GM12878 (cell line): ENCODE measurements at regions of chr9 and their contacts with region 1.

Region 1: GRCh38 chr9:137223078-137223970 is 1.3 kb upstream of the RNF208 start:
- DNase-seq: peak; percentile 93
- ATAC-seq: peak; percentile 87
- H3K4me3 ChIP-seq: peak overlapping the region; percentile 93
- H3K27ac ChIP-seq: peak overlapping the region; percentile 73
- H3K4me1 ChIP-seq: peaks cover 16% of the 10 kb centered on the region
- H3K27me3 ChIP-seq: no peaks in the 10 kb centered on the region
- CTCF ChIP-seq: no peak
- EP300 ChIP-seq: no peak
- POLR2A ChIP-seq: peak; percentile 79
- RAD21 ChIP-seq: no peak

Region 2: DNA sequence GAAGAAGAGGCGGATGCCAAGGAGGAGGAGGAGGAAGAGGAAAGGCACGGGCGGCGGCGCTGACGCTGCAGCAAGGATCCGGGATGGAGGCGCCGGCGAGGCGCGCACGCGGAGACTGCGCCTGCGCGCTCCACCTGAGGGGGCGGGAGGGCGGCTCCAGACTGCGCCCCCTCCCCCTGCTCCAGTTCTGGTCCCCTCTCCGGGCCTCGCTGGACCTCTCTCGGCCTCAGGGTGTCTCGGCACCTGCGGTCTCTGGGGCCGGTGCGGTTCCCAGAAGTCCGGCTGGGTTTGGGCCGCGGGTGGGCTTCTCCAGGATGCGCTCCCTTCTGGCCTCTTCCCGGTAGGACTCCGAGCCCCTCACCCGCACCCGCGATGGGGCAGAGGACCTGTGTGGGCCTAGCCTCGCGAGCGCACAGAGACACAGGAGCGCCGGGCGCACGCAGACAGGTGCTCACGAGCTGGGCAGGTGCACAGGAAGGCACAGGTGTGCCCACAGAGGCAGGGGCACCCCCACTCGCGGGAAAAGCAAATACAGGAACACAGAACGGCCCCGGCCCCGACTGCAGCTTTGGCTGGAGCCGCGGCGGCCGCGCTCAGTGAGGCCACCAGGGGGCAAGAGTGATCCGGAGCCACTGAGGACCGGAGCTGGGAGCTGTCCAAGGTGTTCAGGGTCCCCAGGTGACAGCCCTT is 177.1 kb before region 1 on chr9 and contains the start of gene NPDC1:
- CTCF ChIA-PET with region 1: interaction called, 5 read pairs
- POLR2A ChIA-PET with region 1: no interaction called
- RAD21 ChIA-PET with region 1: interaction called, 7 read pairs
- SMC1A ChIA-PET with region 1: interaction called, 3 read pairs
- in situ Hi-C with region 1: no loop called
- intact Hi-C with region 1: loop called (anchors 10 kb)
- DNase-seq: no peak
- ATAC-seq: peak; percentile 90
- H3K4me3 ChIP-seq: no peak within 1 kb of the TSS
- H3K27ac ChIP-seq: no peak within 1 kb of the TSS
- H3K4me1 ChIP-seq: no peaks in the 10 kb centered on the region
- H3K27me3 ChIP-seq: peaks cover 12 to 18% of the 10 kb centered on the region in 2 experiments; a peak in 3 of 4 replicates
- CTCF ChIP-seq: peak; percentile 82 to 95 (median 93)
- EP300 ChIP-seq: no peak
- POLR2A ChIP-seq: no peak
- RAD21 ChIP-seq: peak; percentile 63
- polyA plus RNA-seq, gene NPDC1: not detected

Region 3: GRCh38 chr9:137086531-137087408 is 136.6 kb before region 1 on chr9 and contains the start of gene MAN1B1:
- CTCF ChIA-PET with region 1: interaction called, 6 read pairs
- POLR2A ChIA-PET with region 1: interaction called, 13 read pairs
- RAD21 ChIA-PET with region 1: no interaction called
- SMC1A ChIA-PET with region 1: no interaction called
- in situ Hi-C with region 1: no loop called
- intact Hi-C with region 1: no loop called
- DNase-seq: peak; percentile 99
- ATAC-seq: peak; percentile 83
- H3K4me3 ChIP-seq: peak within 1 kb of the TSS; percentile 83
- H3K27ac ChIP-seq: peak within 1 kb of the TSS; percentile 90
- H3K4me1 ChIP-seq: peaks cover 29% of the 10 kb centered on the region
- H3K27me3 ChIP-seq: no peaks in the 10 kb centered on the region
- CTCF ChIP-seq: peak in 1 of 3 experiments; percentile 23; a peak in 1 of 6 replicates
- EP300 ChIP-seq: no peak
- POLR2A ChIP-seq: no peak
- RAD21 ChIP-seq: no peak
- polyA plus RNA-seq, gene MAN1B1: 0.71 to 2.0 TPM

Region 4: GRCh38 chr9:137114610-137115391 is 108.5 kb before region 1 on chr9 and contains the start of gene DPP7:
- CTCF ChIA-PET with region 1: interaction called, 22 read pairs
- POLR2A ChIA-PET with region 1: interaction called, 3 read pairs
- RAD21 ChIA-PET with region 1: interaction called, 4 read pairs
- SMC1A ChIA-PET with region 1: interaction called, 11 read pairs
- in situ Hi-C with region 1: no loop called
- intact Hi-C with region 1: loop called (anchors 1 kb)
- DNase-seq: no peak
- ATAC-seq: peak; percentile 97
- H3K4me3 ChIP-seq: peak within 1 kb of the TSS; percentile 70
- H3K27ac ChIP-seq: peak within 1 kb of the TSS; percentile 58; the same call in 1 of the 2 replicates
- H3K4me1 ChIP-seq: peaks cover 6% of the 10 kb centered on the region; the same call in 1 of the 2 replicates
- H3K27me3 ChIP-seq: no peaks in the 10 kb centered on the region
- CTCF ChIP-seq: no peak
- EP300 ChIP-seq: no peak
- POLR2A ChIP-seq: peak; percentile 87
- RAD21 ChIP-seq: no peak
- polyA plus RNA-seq, gene DPP7: 0.68 to 10.0 TPM

Region 5: DNA sequence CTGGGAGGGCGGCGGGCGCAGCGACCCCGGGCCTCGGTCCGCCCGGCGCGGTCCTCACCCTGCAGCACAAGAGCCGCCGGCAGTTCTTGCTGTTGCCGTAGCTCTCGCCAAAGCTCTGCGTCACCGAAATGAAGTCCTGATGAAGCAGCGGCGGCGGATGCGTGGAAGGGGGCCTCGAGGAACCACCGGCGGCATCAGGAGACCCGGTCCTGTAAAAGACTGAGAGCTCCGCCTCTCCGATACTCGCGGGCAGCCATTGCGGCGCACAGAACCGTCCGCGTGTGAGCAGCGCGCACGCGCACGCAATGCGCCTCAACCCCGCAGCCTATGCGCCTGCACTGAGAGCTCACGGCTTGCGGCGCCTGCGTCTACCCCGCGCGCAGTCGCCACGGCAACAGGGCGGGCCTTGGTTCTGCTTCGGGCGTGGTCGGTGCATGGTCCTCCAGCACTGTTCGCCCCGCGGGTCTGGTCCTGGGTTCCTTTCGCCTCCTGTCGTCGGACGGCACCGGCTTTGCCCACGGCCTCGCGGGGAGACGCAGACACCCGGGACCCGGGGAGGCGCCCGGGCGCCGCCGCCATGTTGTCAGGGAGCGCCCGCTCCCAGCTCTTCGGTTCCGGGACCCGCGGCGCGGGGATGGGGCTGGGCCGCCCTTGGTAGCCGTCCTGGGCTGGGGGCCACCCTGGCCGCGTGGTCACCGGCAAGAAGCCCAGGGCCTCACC is 93.7 kb before region 1 on chr9:
- CTCF ChIA-PET with region 1: interaction called, 4 read pairs
- POLR2A ChIA-PET with region 1: interaction called, 27 read pairs
- RAD21 ChIA-PET with region 1: interaction called, 12 read pairs
- SMC1A ChIA-PET with region 1: interaction called, 5 read pairs
- in situ Hi-C with region 1: loop called (anchors 5 kb)
- intact Hi-C with region 1: no loop called
- DNase-seq: peak; percentile 75
- ATAC-seq: peak; percentile 95
- H3K4me3 ChIP-seq: peak overlapping the region; percentile 72
- H3K27ac ChIP-seq: peak overlapping the region; percentile 82
- H3K4me1 ChIP-seq: peaks cover 8% of the 10 kb centered on the region
- H3K27me3 ChIP-seq: no peaks in the 10 kb centered on the region
- CTCF ChIP-seq: no peak
- EP300 ChIP-seq: no peak
- POLR2A ChIP-seq: peak; percentile 83
- RAD21 ChIP-seq: no peak

Region 6: DNA sequence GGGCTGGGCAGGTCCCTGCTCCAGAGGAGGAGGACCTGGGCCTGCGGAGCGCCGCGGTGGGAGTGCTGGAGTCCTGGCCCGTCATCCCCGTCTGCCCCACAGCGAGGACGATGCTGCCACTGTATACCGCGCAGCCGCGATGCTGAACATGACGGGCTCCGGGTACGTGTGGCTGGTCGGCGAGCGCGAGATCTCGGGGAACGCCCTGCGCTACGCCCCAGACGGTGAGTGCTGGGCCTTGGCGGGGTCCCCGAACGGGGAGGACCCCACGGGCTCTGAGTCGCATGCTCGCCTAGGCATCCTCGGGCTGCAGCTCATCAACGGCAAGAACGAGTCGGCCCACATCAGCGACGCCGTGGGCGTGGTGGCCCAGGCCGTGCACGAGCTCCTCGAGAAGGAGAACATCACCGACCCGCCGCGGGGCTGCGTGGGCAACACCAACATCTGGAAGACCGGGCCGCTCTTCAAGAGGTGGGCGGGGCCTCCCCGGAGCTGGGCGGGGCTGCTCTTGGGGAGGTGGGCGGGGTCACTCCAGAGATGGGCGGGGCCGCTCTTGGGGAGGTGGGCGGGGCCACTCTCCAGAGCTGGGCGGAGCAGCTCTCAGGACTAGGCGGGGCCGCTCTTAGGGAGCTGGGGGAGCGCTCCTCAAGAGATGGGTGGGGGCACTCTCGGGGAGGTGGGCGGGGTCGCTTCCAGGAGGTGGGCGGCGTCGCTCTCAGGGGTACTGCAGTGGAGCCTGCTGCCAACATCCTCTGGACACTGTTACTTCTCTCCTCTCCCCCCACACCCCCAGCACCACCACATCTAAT is 66.6 kb before region 1 on chr9:
- CTCF ChIA-PET with region 1: interaction called, 10 read pairs
- POLR2A ChIA-PET with region 1: interaction called, 33 read pairs
- RAD21 ChIA-PET with region 1: interaction called, 34 read pairs
- SMC1A ChIA-PET with region 1: interaction called, 4 read pairs
- in situ Hi-C with region 1: no loop called
- intact Hi-C with region 1: no loop called
- DNase-seq: no peak
- ATAC-seq: peak; percentile 73
- H3K4me3 ChIP-seq: peak overlapping the region; percentile 39; the same call in 1 of the 2 replicates
- H3K27ac ChIP-seq: no peak overlapping the region
- H3K4me1 ChIP-seq: peaks cover 31% of the 10 kb centered on the region
- H3K27me3 ChIP-seq: no peaks in the 10 kb centered on the region
- CTCF ChIP-seq: no peak
- EP300 ChIP-seq: no peak
- POLR2A ChIP-seq: no peak
- RAD21 ChIP-seq: no peak

Region 7: GRCh38 chr9:137194388-137194787 is 28.9 kb before region 1 on chr9:
- CTCF ChIA-PET with region 1: interaction called, 21 read pairs
- POLR2A ChIA-PET with region 1: interaction called, 22 read pairs
- RAD21 ChIA-PET with region 1: interaction called, 23 read pairs
- SMC1A ChIA-PET with region 1: interaction called, 4 read pairs
- in situ Hi-C with region 1: no loop called
- intact Hi-C with region 1: loop called (anchors 5 kb)
- DNase-seq: no peak
- ATAC-seq: no peak
- H3K4me3 ChIP-seq: no peak overlapping the region
- H3K27ac ChIP-seq: no peak overlapping the region
- H3K4me1 ChIP-seq: peaks cover 9% of the 10 kb centered on the region
- H3K27me3 ChIP-seq: no peaks in the 10 kb centered on the region
- CTCF ChIP-seq: no peak
- EP300 ChIP-seq: no peak
- POLR2A ChIP-seq: no peak
- RAD21 ChIP-seq: no peak

Region 8: DNA sequence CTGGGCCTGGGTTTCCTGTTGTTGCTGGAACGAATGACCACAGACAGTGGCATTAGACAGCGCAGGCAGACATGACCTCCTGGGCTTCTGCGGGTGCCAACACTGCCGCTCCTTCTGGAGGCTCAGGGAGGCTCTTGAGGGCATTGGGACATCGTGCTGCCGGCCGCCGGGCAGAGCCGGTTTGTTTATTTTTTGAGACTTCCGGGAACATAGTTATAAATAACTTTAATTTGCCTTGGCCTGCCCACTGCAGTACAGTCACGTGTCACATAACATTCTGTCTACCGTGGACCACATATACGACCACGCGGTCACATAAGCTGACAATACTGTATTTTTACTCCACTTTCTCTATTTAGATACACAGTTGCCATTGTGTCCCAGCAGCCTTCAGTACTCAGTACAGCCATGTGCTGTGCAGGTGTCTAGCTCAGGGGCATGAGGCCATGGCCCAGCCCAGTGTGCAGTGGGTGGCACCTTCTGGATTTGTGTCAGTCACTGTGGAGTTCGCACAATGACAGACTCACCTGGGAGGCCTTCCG is 46.0 kb after region 1 on chr9:
- CTCF ChIA-PET with region 1: no interaction called
- POLR2A ChIA-PET with region 1: no interaction called
- RAD21 ChIA-PET with region 1: no interaction called
- SMC1A ChIA-PET with region 1: no interaction called
- in situ Hi-C with region 1: no loop called
- intact Hi-C with region 1: no loop called
- DNase-seq: peak; percentile 34
- ATAC-seq: peak; percentile 64
- H3K4me3 ChIP-seq: peak overlapping the region; percentile 46; the same call in 1 of the 2 replicates
- H3K27ac ChIP-seq: peak overlapping the region; percentile 47
- H3K4me1 ChIP-seq: peaks cover 22% of the 10 kb centered on the region
- H3K27me3 ChIP-seq: no peaks in the 10 kb centered on the region
- CTCF ChIP-seq: no peak
- EP300 ChIP-seq: no peak
- POLR2A ChIP-seq: no peak; the same call in 1 of the 2 replicates
- RAD21 ChIP-seq: no peak

Region 9: DNA sequence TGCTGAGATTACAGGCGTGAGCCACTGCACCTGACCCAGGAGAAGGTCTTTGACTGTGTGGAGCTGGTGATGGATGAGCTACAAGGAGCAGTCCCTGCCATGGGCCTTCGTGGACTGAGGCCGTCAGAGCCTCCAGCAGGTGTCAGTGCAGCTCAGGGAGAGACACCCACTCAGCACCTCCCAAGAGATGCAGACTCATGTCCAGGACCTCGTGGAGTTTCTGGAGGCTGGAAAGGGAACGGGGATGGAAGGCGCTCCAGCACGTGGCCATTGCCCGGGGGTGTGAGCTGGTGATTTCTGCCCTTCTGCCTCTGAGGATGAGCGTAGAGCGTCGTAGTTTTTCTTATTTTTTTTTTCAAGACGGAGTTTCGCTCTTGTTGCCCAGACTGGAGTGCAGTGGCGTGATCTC is 63.7 kb after region 1 on chr9:
- CTCF ChIA-PET with region 1: no interaction called
- POLR2A ChIA-PET with region 1: no interaction called
- RAD21 ChIA-PET with region 1: no interaction called
- SMC1A ChIA-PET with region 1: no interaction called
- in situ Hi-C with region 1: no loop called
- intact Hi-C with region 1: no loop called
- DNase-seq: no peak
- ATAC-seq: peak; percentile 87
- H3K4me3 ChIP-seq: no peak overlapping the region
- H3K27ac ChIP-seq: no peak overlapping the region
- H3K4me1 ChIP-seq: peaks cover 16% of the 10 kb centered on the region
- H3K27me3 ChIP-seq: no peaks in the 10 kb centered on the region
- CTCF ChIP-seq: peak; percentile 45 to 59 (median 52); a peak in 5 of 6 replicates
- EP300 ChIP-seq: no peak
- POLR2A ChIP-seq: no peak
- RAD21 ChIP-seq: peak; percentile 62